RWPE1 (cell line): ENCODE measurements at regions of chr7 and their contacts with region 1.

Region 1: DNA sequence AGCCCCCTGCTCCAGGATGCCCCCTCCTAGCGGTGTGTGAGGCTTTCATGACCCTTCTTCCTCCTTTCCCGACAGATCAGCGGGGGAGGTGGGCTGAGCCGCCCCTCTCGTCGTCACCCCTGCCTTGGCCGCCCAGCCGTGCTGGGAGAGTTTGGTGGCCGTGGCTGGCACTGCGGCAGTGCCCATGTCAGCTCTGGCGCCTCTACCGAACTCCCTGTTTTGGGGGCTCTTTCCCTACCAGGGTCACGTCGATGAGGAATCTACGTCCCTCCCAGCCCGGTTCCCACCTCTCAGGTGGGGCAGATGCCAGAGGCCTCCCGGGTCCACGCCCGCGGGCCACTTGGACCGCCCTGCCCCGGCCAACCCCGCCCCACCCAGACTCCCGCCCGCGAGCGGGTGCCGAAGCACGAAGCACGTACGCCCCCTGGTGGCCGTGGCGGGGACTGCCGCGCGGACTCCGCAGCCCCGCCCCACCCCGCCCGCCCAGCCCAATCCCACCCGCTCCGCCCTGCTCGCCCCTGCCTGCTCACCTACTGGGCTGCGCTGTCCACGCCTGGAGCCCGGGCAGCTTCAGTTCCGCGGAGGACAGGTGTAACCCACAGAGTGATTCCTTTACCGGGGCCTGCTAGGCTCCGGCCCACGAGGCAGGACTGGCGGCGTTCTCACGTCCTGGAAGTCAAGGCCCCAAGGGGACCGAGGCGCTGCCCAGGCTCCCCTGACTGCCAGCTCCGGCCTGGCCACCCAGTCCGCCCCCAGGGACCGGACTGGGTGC is 127.1 kb downstream of the UBE2H start:
- DNase-seq: peak; percentile 72
- H3K27ac ChIP-seq: peak overlapping the region; percentile 85
- CTCF ChIP-seq: peak; percentile 93

Region 2: DNA sequence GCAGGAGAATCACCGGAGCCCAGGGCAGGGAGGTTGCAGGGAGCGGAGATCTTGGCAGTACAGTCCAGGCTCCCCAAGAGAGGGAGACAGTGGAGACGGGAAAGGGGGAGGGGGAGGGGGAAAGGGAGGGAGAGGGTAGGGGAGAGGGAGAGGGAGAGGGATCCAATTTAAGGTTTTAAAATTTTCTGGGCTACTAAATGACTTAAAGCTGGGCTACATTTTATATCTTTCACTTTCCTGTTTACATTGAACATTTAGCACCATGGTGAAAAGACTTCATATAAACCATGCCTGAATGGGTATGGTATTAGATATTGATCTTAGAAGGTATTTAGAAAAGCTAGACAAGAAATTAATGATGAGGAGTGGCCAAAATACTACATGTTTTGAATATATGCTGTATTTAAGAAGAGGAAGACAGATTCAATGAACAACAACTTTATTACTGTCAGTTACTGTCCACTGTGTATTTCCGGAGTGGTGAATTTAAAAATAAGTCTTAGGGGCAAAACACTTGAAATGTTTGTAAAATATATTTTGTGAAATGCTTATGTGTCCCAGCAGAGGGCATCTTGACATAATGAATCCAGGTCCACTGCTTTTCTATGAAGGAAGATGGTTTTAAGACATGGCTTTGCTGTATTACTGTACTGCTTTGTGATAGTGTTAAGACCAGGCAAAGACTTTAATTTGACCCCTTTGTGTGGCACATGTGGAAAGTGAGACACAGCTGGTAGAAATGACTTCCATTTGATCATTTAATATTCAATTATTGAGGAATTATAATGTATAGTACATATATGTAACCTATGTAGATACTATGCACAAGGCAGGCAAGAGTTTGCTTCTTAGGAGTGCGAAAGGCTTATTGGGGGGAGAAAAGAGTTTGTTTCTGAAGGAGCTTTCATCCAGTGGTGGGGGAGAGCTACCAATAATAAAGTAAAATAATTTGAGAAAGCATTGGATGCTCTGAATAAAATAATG is 161.4 kb before region 1 on chr7:
- CTCF ChIA-PET with region 1: interaction called, 10 read pairs
- POLR2A ChIA-PET with region 1: no interaction called
- DNase-seq: peak; percentile 34
- H3K27ac ChIP-seq: peak overlapping the region; percentile 55
- CTCF ChIP-seq: peak; percentile 74

Region 3: DNA sequence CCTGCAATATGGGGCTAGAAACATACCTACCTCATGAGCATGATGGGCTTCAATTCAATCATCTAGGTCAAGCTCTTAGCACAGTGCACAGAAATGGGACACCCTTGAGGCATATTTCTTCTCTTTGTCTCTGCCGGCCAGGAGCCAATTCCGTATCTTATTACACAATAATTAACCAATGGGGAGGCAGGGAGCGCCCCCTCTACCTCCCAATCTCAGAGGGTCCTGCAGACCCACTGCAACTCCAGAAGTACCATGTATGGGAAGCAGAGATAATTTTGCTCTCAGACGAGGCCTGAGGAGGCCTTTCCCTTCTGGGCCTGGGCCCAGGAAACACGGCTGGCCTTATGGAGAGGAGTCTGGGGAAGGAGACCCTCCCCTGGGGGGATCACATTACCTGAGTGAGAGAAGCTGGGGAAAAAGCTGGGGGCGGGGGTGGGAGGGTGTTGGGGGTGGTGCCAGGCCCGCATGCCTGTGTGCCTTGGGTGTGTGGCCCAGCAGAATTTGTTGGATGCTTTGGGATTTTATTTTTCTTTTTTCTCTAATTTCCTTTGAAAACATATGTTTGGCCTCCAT is 28.4 kb before region 1 on chr7:
- CTCF ChIA-PET with region 1: no interaction called
- POLR2A ChIA-PET with region 1: no interaction called
- DNase-seq: no peak
- H3K27ac ChIP-seq: no peak overlapping the region
- CTCF ChIP-seq: no peak

Region 4: DNA sequence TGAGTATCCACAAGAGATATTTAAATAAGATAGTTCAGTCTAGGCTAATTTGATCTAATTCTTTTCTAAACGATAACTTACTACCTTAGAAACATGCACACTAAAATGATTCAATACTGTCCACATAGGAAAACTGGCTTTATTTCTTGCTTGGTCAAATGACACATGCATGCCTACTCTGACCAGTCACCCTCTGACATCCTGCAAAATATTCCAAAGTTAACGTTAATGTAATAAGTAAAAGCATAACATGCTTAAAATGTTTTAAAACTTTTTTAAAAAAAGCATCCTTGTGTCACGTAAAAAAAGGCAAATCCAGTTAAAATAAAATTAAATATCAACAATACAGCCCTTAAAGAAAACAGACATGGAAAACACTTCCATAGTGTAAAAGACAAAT is 56.8 kb after region 1 on chr7:
- CTCF ChIA-PET with region 1: no interaction called
- POLR2A ChIA-PET with region 1: interaction called, 11 read pairs
- DNase-seq: no peak
- H3K27ac ChIP-seq: no peak overlapping the region
- CTCF ChIP-seq: no peak

Region 5: DNA sequence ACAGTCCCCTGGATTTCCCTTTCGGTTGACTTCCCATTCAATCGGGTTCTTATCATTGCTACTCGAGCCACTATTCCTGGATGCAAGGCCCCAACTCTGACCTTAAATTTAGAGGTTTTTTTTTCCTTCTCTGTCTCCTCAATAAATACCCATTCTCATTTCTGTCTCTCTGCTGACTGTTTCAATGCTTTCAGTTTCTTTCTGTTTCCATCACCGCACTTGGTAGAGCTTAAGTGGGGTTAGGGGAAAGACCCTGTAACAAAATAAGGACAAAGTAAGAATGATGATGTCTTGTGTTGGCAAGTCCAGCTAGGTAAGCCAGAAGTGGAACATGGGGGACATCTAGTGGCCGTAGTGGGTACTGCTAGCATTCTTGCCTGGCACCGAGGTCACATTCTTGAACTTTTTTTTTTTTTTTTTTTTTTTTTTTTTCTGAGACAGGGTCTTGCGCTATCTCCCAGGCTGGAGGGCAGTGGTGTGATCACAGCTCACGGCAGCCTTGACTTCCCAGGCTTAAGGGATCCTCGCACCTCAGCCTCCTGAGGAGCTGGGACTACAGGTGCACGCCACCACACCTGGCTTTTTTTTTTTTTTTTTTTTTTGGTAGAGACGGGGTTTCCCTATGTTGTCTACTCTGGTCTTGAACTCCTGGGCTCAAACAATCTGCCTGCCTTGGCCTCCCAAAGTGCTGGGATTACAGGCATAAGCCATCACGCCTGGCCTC is 185.2 kb after region 1 on chr7:
- CTCF ChIA-PET with region 1: interaction called, 10 read pairs
- POLR2A ChIA-PET with region 1: no interaction called
- DNase-seq: peak; percentile 44
- H3K27ac ChIP-seq: peak overlapping the region; percentile 89
- CTCF ChIP-seq: peak; percentile 97